Panc1 (cell line): ENCODE measurements at regions of chr2 and their contacts with region 1.

Region 1: GRCh38 chr2:42086500-42086953 is 38.7 kb downstream of the PKDCC start:
- DNase-seq: peak; percentile 55
- ATAC-seq: peak; percentile 87
- H3K4me3 ChIP-seq: no peak overlapping the region
- H3K27ac ChIP-seq: peak overlapping the region; percentile 21; the same call in 1 of the 2 replicates
- H3K4me1 ChIP-seq: peaks cover 12% of the 10 kb centered on the region
- H3K27me3 ChIP-seq: no peaks in the 10 kb centered on the region
- CTCF ChIP-seq: peak; percentile 80

Region 2: DNA sequence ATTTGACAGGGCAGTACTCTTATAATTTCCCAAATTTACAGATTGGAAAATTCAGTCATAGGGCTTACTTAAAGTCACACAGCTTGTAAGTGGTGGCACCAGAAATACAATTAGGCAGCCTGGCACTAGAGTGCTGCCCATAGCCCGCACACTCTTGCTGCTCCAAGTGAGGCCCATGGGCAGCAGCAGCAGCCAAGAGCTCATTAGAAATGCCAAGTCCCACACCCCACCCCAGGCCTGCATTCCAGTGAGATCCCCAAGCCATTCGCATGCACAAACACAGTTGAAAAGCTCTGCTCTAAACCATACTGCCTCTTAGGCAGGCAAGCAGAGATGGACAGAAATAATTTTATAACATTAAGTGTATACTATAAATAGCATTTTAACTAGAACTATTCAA is 418.0 kb before region 1 on chr2:
- CTCF ChIA-PET with region 1: no interaction called
- POLR2A ChIA-PET with region 1: no interaction called
- in situ Hi-C with region 1: no loop called
- intact Hi-C with region 1: no loop called
- DNase-seq: no peak
- ATAC-seq: no peak
- H3K4me3 ChIP-seq: no peak overlapping the region
- H3K27ac ChIP-seq: no peak overlapping the region
- H3K4me1 ChIP-seq: no peaks in the 10 kb centered on the region
- H3K27me3 ChIP-seq: peaks cover 5% of the 10 kb centered on the region
- CTCF ChIP-seq: no peak

Region 3: GRCh38 chr2:41853427-41854216 is 232.9 kb before region 1 on chr2:
- CTCF ChIA-PET with region 1: interaction called, 15 read pairs
- POLR2A ChIA-PET with region 1: no interaction called
- in situ Hi-C with region 1: no loop called
- intact Hi-C with region 1: loop called (anchors 1 kb)
- DNase-seq: no peak
- ATAC-seq: peak; percentile 73
- H3K4me3 ChIP-seq: no peak overlapping the region
- H3K27ac ChIP-seq: no peak overlapping the region
- H3K4me1 ChIP-seq: no peaks in the 10 kb centered on the region
- H3K27me3 ChIP-seq: no peaks in the 10 kb centered on the region; the same call in 1 of the 2 replicates
- CTCF ChIP-seq: peak; percentile 84

Region 4: GRCh38 chr2:41869542-41870264 is 216.8 kb before region 1 on chr2:
- CTCF ChIA-PET with region 1: interaction called, 11 read pairs
- POLR2A ChIA-PET with region 1: no interaction called
- in situ Hi-C with region 1: no loop called
- intact Hi-C with region 1: loop called (anchors 1 kb)
- DNase-seq: peak; percentile 35
- ATAC-seq: peak; percentile 94
- H3K4me3 ChIP-seq: no peak overlapping the region
- H3K27ac ChIP-seq: no peak overlapping the region
- H3K4me1 ChIP-seq: peaks cover 6% of the 10 kb centered on the region; the same call in 1 of the 2 replicates
- H3K27me3 ChIP-seq: no peaks in the 10 kb centered on the region
- CTCF ChIP-seq: peak; percentile 91

Region 5: GRCh38 chr2:41879235-41879916 is 207.2 kb before region 1 on chr2:
- CTCF ChIA-PET with region 1: interaction called, 10 read pairs
- POLR2A ChIA-PET with region 1: no interaction called
- in situ Hi-C with region 1: no loop called
- intact Hi-C with region 1: no loop called
- DNase-seq: no peak
- ATAC-seq: peak; percentile 58; the same call in 1 of the 2 replicates
- H3K4me3 ChIP-seq: no peak overlapping the region
- H3K27ac ChIP-seq: no peak overlapping the region
- H3K4me1 ChIP-seq: no peaks in the 10 kb centered on the region
- H3K27me3 ChIP-seq: no peaks in the 10 kb centered on the region
- CTCF ChIP-seq: no peak

Region 6: GRCh38 chr2:42196403-42197267 is 110.1 kb after region 1 on chr2:
- CTCF ChIA-PET with region 1: no interaction called
- POLR2A ChIA-PET with region 1: no interaction called
- in situ Hi-C with region 1: no loop called
- intact Hi-C with region 1: no loop called
- DNase-seq: no peak
- ATAC-seq: peak; percentile 57
- H3K4me3 ChIP-seq: no peak overlapping the region
- H3K27ac ChIP-seq: peak overlapping the region; percentile 26; the same call in 1 of the 2 replicates
- H3K4me1 ChIP-seq: peaks cover 44% of the 10 kb centered on the region
- H3K27me3 ChIP-seq: no peaks in the 10 kb centered on the region
- CTCF ChIP-seq: peak; percentile 61